WTC11 (cell line): ENCODE measurements at regions of chr19 and their contacts with region 1.

Region 1: GRCh38 chr19:15469513-15470297 is 5.4 kb upstream of the RASAL3 start:
- DNase-seq: peak; percentile 56
- ATAC-seq: peak; percentile 86
- H3K4me3 Mint-ChIP-seq: peak overlapping the region; percentile 75
- H3K27ac Mint-ChIP-seq: no peak overlapping the region
- H3K4me1 Mint-ChIP-seq: peaks cover 6% of the 10 kb centered on the region
- H3K27me3 Mint-ChIP-seq: peaks cover 66% of the 10 kb centered on the region
- CTCF ChIP-seq: no peak

Region 2: GRCh38 chr19:16070366-16070990 is 600.8 kb after region 1 on chr19:
- CTCF ChIA-PET with region 1: no interaction called
- POLR2A ChIA-PET with region 1: interaction called, 10 read pairs
- DNase-seq: no peak
- ATAC-seq: no peak
- H3K4me3 Mint-ChIP-seq: no peak overlapping the region
- H3K27ac Mint-ChIP-seq: no peak overlapping the region
- H3K4me1 Mint-ChIP-seq: peaks cover 29% of the 10 kb centered on the region
- H3K27me3 Mint-ChIP-seq: no peaks in the 10 kb centered on the region
- CTCF ChIP-seq: no peak